ENCODE measurements at regions of chr3 and their contacts with region 1.

Region 1: DNA sequence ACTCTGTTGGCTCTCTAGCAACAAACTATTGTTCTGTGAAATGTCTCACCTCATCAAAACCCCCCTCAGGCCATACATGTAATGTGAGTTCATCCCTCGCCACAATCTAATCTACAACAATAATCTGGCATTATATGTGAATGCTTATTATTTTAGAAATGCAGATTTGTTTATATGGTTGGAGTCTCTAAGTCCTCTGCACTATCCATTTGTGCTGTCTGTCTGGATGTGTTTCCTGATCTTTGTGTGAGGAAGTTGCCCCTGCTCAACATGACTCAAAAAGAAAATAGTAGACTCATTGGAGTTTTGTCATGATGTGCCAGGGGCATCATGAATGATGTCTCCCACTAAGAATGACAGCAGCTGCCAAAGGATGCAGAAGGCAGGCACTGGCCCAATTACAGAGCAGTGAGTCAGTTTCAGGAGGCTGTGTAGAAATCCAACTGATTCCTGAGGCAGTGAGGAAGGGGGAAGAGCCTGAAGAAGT is 161.6 kb upstream of the PDZRN3 start:
- DNase-seq: peak; percentile 97
- H3K4me3 ChIP-seq: no peak overlapping the region
- H3K27ac ChIP-seq: peak overlapping the region; percentile 78
- H3K4me1 ChIP-seq: peaks cover 25% of the 10 kb centered on the region
- H3K27me3 ChIP-seq: no peaks in the 10 kb centered on the region
- CTCF ChIP-seq: no peak

Region 2: GRCh38 chr3:73805435-73805834 is 19.1 kb after region 1 on chr3:
- CTCF ChIA-PET with region 1: no interaction called
- dilution Hi-C with region 1: no loop called
- in situ Hi-C with region 1: no loop called
- intact Hi-C with region 1: loop called (anchors 2 kb)
- DNase-seq: no peak
- H3K4me3 ChIP-seq: no peak overlapping the region
- H3K27ac ChIP-seq: no peak overlapping the region
- H3K4me1 ChIP-seq: peaks cover 21% of the 10 kb centered on the region
- H3K27me3 ChIP-seq: no peaks in the 10 kb centered on the region
- CTCF ChIP-seq: no peak

Region 3: DNA sequence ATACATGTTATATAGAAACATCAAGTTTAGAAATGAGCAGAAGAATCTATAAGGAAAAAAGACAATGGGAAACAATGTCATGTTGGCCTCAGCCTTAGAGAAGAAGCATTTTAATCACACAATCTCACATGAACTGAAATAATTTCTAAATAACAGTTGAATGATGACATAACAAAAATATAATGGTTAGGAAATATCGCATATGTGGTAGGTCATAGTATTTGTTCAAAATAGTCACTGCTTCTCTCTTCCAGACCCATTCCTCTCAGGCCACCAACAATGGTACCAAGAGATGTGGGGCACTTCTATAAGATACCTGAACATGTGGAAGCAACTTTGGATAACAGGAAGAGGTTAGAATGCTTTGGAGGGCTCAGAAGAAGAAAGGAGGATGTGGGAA is 34.1 kb after region 1 on chr3:
- CTCF ChIA-PET with region 1: no interaction called
- dilution Hi-C with region 1: no loop called
- in situ Hi-C with region 1: no loop called
- intact Hi-C with region 1: no loop called
- DNase-seq: no peak
- H3K4me3 ChIP-seq: no peak overlapping the region
- H3K27ac ChIP-seq: no peak overlapping the region
- H3K4me1 ChIP-seq: peaks cover 14% of the 10 kb centered on the region
- H3K27me3 ChIP-seq: no peaks in the 10 kb centered on the region
- CTCF ChIP-seq: no peak

Region 4: GRCh38 chr3:73855813-73856514 is 69.6 kb after region 1 on chr3:
- CTCF ChIA-PET with region 1: no interaction called
- dilution Hi-C with region 1: no loop called
- in situ Hi-C with region 1: no loop called
- intact Hi-C with region 1: no loop called
- DNase-seq: no peak
- H3K4me3 ChIP-seq: no peak overlapping the region
- H3K27ac ChIP-seq: no peak overlapping the region
- H3K4me1 ChIP-seq: no peaks in the 10 kb centered on the region
- H3K27me3 ChIP-seq: no peaks in the 10 kb centered on the region
- CTCF ChIP-seq: no peak